Calu3 (cell line): ENCODE measurements at regions of chr2 and their contacts with region 1.

Region 1: GRCh38 chr2:31785876-31786275 is 205.1 kb upstream of the SRD5A2 start:
- DNase-seq: peak; percentile 52
- H3K4me3 Mint-ChIP-seq: no peak overlapping the region
- H3K27ac Mint-ChIP-seq: peak overlapping the region; percentile 80
- H3K4me1 Mint-ChIP-seq: peaks cover 58% of the 10 kb centered on the region
- H3K27me3 Mint-ChIP-seq: no peaks in the 10 kb centered on the region
- CTCF ChIP-seq: no peak

Region 2: GRCh38 chr2:31736695-31737454 is 49.0 kb before region 1 on chr2:
- CTCF ChIA-PET with region 1: no interaction called
- intact Hi-C with region 1: loop called (anchors 5 kb)
- DNase-seq: peak; percentile 36
- H3K4me3 Mint-ChIP-seq: no peak overlapping the region
- H3K27ac Mint-ChIP-seq: no peak overlapping the region
- H3K4me1 Mint-ChIP-seq: peaks cover 44% of the 10 kb centered on the region
- H3K27me3 Mint-ChIP-seq: no peaks in the 10 kb centered on the region
- CTCF ChIP-seq: no peak

Region 3: DNA sequence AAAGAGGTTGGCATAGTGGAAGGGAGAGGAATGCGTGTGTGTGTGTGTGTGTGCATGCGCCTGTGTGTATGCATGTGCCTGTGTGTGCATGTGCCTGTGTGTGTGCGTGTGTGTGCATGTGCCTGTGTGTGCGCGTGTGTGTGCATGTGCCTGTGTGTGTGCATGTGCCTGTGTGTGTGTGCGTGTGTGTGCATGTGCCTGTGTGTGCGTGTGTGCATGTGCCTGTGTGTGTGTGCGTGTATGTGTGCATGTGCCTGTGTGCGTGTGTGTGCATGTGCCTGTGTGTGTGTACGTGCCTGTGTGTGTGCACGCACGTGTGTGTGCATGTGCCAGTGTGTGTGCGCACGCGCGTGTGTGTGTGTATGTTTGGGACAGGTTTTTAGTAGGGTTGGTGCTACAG is 19.8 kb after region 1 on chr2:
- CTCF ChIA-PET with region 1: no interaction called
- intact Hi-C with region 1: no loop called
- DNase-seq: no peak
- H3K4me3 Mint-ChIP-seq: no peak overlapping the region
- H3K27ac Mint-ChIP-seq: no peak overlapping the region
- H3K4me1 Mint-ChIP-seq: no peaks in the 10 kb centered on the region
- H3K27me3 Mint-ChIP-seq: no peaks in the 10 kb centered on the region
- CTCF ChIP-seq: no peak